CD4-positive, alpha-beta memory T cell (primary cell): ENCODE measurements at regions of chr2 and their contacts with region 1.

Region 1: DNA sequence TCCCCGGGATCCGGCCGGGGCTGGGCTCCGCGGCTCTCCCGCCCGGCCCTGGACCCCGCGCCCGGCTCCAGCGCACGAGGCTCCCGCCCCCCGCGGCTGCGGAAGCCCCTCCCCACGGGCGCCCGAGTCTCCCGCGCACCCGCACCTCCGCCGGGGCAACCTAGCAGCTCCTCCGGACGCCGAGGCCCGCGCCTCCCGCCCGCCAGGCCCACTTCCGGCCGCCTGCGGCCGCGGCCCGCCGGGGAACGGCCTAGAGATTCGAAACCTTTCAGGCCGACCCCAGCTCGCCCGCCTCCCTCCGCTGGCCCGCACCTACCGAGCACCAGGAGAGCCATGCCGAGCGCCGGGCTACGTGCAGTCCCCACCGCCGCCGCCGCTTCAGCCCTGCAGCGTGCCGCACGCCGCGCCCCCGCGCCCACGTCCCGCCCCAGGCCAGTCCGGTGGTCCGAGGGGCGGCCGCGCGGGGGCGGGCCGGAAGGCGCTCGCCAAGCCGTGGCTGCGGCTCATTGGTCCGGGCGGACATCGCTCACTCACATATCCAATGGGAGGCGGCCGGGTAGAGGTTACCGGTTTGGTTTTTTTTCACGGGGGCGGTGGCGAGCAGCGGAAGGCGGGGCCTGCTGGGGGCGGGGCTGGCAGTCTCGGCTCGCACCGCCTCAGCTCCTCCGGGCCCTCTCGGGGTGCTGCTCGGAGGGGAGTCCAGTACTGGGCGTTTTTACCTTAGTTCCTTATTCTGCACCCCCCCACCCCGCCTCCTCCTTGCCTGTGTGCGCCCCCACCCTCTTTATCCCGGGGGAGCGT is at the start of gene PDIA6:
- DNase-seq: peak; percentile 90 to 95 (median 92)
- H3K4me3 ChIP-seq: peak within 1 kb of the TSS; percentile 72 to 92
- H3K4me3 Mint-ChIP-seq: peak within 1 kb of the TSS; percentile 84 to 95 (median 94)
- H3K27ac ChIP-seq: peak within 1 kb of the TSS; percentile 76
- H3K27ac Mint-ChIP-seq: peak within 1 kb of the TSS; percentile 76 to 95 (median 94)
- H3K4me1 ChIP-seq: peaks cover 47% of the 10 kb centered on the region
- H3K4me1 Mint-ChIP-seq: peaks cover 30 to 43% (median 34%) of the 10 kb centered on the region in 4 donors
- H3K27me3 ChIP-seq: peaks cover under 1% of the 10 kb centered on the region
- H3K27me3 Mint-ChIP-seq: no peaks in the 10 kb centered on the region
- total RNA-seq, gene PDIA6: 75.9 to 84.7 TPM

Region 2: DNA sequence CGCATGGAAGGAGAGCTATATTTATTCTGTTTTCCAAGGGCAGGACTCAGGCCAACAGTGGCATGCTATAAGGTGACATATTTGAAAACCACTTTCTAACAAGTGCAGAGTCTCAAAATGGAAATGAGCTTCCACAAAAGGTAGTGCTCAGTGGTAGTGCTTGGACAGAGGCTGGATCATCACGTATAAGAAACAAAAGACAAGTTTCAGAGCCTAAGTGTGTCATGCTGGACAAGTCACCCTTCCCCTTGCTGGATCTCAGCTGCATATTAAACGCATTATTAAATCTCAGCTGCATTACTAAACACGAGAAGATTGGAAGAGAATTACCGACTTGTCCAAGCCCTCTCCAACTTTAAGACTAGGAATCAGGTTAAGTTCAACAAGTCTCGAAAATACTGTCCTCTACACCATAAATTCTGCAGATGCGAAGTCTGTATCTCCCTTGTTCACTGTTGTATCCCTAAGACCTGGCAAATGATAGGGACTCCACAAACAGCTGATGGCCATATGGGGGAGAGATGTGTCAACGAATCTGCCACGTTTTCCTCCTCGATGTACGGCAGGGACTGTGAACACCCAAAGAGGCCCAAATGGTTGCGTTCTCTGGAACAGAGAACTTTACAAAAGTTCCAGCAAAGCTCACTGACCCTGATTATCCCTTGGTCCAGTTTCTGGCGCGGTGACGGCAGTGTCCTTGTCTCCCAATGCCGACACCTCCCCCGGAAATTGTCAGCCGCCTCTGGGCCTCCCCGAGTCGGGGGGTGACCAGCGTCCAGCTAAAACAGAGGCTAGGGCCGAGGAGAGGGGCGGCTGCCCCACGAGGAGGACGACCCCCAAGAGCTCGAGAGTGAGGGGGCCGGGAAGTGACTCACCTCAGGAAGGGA is 123.4 kb before region 1 on chr2:
- CTCF ChIA-PET with region 1: interaction called, 3 read pairs
- POLR2A ChIA-PET with region 1: interaction called, 8 read pairs
- intact Hi-C with region 1: loop called (anchors 1 kb)
- DNase-seq: peak in 1 of 5 donors; percentile 13
- H3K4me3 ChIP-seq: peak overlapping the region; percentile 27 to 87
- H3K4me3 Mint-ChIP-seq: no peak overlapping the region
- H3K27ac ChIP-seq: peak overlapping the region; percentile 81
- H3K27ac Mint-ChIP-seq: no peak overlapping the region
- H3K4me1 ChIP-seq: peaks cover 31% of the 10 kb centered on the region
- H3K4me1 Mint-ChIP-seq: peaks cover 0 to 13% (median 10%) of the 10 kb centered on the region in 4 donors
- H3K27me3 ChIP-seq: no peaks in the 10 kb centered on the region
- H3K27me3 Mint-ChIP-seq: no peaks in the 10 kb centered on the region

Region 3: DNA sequence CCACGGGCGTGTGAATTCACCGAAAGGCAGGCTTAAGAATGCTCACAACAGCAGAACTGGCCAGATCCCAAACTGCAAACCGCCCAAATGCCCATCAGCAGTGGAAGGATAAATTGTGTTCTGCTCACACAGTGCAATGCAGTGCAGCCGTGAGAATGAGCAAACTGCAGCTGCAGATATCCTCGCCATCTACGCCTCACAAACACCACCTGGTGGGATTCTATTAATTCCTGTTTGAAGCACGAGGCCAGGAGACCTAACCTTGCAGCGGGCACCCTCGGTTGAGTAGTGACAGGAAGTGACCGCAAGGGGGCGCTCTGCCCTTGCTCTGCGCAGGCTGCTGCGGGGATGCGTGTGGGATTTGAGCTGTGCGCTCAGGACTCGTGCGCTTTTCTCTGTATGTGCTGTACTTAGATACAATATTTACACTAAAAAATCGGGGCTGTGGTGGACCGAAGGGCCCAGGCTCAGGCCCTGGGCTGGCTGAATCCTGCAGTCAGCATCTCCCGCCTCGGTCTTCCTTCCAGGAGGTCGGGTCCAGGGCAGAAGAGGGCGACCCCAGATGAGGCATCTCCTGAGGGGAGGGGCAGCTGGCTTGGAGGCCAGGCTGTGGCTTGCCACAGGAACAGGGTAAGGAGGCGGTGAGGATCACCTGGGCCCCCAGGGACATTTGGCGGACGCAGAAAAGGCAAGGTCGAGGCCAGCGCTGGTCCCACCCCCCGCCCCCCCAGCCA is 19.8 kb after region 1 on chr2:
- CTCF ChIA-PET with region 1: interaction called, 21 read pairs
- POLR2A ChIA-PET with region 1: interaction called, 4 read pairs
- intact Hi-C with region 1: loop called (anchors 1 kb)
- DNase-seq: peak; percentile 75 to 79 (median 77)
- H3K4me3 ChIP-seq: no peak overlapping the region
- H3K4me3 Mint-ChIP-seq: peak overlapping the region in 7 of 8 donors; percentile 14 to 54 (median 33)
- H3K27ac ChIP-seq: no peak overlapping the region
- H3K27ac Mint-ChIP-seq: peak overlapping the region in 2 of 7 donors; percentile 23 to 63
- H3K4me1 ChIP-seq: peaks cover 14% of the 10 kb centered on the region
- H3K4me1 Mint-ChIP-seq: peaks cover 4 to 17% (median 9%) of the 10 kb centered on the region in 4 donors
- H3K27me3 ChIP-seq: peaks cover 4% of the 10 kb centered on the region
- H3K27me3 Mint-ChIP-seq: peaks cover 11 to 18% of the 10 kb centered on the region in 2 donors

Region 4: DNA sequence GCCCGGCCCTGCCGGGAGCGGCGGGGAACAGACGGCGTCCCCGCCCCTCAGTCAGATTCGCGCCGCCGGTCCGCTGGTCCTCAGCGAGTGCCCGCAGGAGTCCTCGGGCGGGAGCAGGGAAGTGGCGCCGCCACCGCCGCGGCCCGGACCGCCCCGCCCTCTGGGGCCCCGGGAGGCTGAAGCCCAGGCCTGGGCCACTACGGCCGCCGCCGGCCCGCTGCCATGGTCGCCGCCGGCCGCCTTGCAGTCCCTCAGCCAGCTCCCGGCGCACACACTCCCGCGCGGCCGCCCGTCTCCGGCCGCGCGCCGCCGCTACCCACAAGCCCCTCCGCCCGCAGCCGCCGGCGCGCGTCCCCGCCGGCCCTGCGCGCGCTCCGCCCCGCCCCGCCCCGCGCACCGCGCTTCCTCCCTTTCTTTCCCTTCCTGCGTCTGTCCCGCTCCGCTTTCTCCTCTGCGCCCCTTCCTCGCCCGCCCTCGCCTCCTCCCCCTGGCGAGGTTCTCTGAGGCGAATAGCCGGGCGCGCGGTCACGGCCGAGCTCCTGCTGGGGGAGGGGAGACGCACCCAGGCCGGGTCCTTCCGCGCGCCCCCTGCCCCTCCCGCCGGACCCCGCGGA is 531.9 kb after region 1 on chr2 and contains the start of gene ROCK2:
- CTCF ChIA-PET with region 1: no interaction called
- POLR2A ChIA-PET with region 1: interaction called, 8 read pairs
- intact Hi-C with region 1: loop called (anchors 2 kb)
- DNase-seq: peak; percentile 53 to 66 (median 62)
- H3K4me3 ChIP-seq: peak within 1 kb of the TSS; percentile 81 to 94
- H3K4me3 Mint-ChIP-seq: peak within 1 kb of the TSS; percentile 94 to 100 (median 98)
- H3K27ac ChIP-seq: peak within 1 kb of the TSS; percentile 53
- H3K27ac Mint-ChIP-seq: peak within 1 kb of the TSS; percentile 83 to 97 (median 95)
- H3K4me1 ChIP-seq: peaks cover 40% of the 10 kb centered on the region
- H3K4me1 Mint-ChIP-seq: peaks cover 25 to 45% (median 27%) of the 10 kb centered on the region in 4 donors
- H3K27me3 ChIP-seq: no peaks in the 10 kb centered on the region
- H3K27me3 Mint-ChIP-seq: no peaks in the 10 kb centered on the region
- total RNA-seq, gene ROCK2: 24.3 to 26.7 TPM

Region 5: GRCh38 chr2:11743846-11744553 is 931.4 kb after region 1 on chr2:
- CTCF ChIA-PET with region 1: no interaction called
- POLR2A ChIA-PET with region 1: interaction called, 3 read pairs
- intact Hi-C with region 1: loop called (anchors 5 kb)
- DNase-seq: peak; percentile 59 to 91 (median 65)
- H3K4me3 ChIP-seq: peak overlapping the region; percentile 45 to 61
- H3K4me3 Mint-ChIP-seq: peak overlapping the region; percentile 49 to 92 (median 81)
- H3K27ac ChIP-seq: peak overlapping the region; percentile 48
- H3K27ac Mint-ChIP-seq: peak overlapping the region; percentile 71 to 98 (median 94)
- H3K4me1 ChIP-seq: peaks cover 56% of the 10 kb centered on the region
- H3K4me1 Mint-ChIP-seq: peaks cover 37 to 55% (median 44%) of the 10 kb centered on the region in 4 donors
- H3K27me3 ChIP-seq: no peaks in the 10 kb centered on the region
- H3K27me3 Mint-ChIP-seq: no peaks in the 10 kb centered on the region